Panc1 (cell line): ENCODE measurements at regions of chr1 and their contacts with region 1.

Region 1: DNA sequence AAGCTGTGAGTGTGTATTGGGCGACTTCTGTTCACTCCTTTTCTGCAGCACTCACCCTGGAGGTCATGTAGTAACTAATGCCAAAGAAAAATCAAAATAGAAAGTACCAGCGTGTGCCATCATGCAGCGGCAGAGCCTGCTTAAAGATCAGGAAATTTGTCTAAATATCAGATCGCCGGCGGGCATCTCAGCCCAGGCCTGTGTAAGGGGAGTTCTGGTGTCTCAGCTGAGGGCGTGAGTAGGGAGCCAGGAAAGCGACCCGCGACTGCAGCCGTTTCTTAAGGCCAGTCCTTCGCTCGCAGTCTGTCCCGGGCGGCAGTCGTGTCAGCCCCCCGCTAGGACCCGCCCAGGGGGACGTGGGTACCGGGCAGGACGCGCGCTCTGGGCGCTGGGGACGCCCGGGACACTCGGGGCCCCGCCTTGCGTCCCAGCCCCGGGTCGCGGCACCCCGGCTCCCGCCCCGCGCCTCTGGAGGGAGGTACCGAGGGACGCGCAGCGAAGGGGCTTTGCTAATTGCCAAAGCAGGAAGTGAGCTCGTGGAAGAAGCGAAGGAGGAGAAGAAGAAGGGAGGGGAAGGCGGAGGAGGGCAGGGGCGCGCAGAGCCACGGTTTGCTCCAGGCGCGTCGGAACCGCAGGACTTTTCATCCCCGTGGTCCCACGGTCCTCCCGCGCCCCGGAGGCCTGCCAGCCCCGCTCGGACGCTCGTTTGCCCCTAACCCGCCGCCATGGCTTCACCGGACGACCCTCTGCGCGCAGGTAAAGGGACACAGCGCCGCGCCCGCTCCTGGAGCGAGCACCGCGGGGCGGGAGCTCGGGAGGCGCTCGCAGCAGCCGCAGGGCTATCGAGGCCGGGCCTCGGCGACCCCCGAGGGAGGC is 1.1 kb downstream of the EDARADD start:
- DNase-seq: no peak
- ATAC-seq: peak; percentile 86
- H3K4me3 ChIP-seq: peak overlapping the region; percentile 72 to 95
- H3K27ac ChIP-seq: peak overlapping the region; percentile 98
- H3K4me1 ChIP-seq: peaks cover 58% of the 10 kb centered on the region
- H3K27me3 ChIP-seq: no peaks in the 10 kb centered on the region
- CTCF ChIP-seq: no peak

Region 2: DNA sequence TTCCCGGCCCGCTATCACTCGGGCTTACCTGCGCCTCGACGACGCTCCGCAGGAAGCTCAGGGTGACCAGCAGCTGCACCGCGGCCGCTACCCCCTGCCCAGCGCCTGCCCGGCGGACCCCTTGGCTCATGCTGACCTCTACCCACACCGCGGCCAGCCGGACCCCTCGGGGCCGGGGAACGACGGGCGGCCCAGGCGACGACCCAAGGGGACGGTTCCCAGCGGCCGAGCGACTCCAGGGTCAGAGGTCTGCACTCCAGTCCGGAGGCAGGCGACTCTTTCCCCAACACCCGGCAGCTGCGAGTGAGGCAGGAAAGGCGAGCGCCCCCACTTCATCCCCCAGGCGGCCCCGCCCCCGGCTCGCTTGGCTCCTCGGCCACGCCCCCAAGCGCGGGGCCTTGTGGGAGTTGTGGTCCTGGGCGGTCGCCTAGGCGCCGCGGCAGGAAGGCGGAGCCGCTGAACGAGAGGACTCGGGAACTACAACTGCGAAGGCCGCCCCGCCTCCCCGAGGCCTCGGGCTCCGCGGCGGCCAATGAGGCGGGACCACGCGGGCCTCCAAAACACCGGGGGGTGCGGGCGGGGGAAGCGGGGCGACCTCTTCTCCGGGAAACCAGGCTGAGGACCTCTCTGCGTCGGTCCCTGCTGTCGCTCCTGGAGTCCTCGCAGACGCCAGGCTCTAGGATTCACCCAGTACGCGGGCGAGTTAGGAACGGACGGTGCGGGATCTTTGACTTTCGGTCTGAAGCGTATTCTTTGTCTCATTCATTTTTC is 113.3 kb before region 1 on chr1 and contains the start of gene ERO1B:
- CTCF ChIA-PET with region 1: no interaction called
- POLR2A ChIA-PET with region 1: no interaction called
- in situ Hi-C with region 1: no loop called
- intact Hi-C with region 1: loop called (anchors 10 kb)
- DNase-seq: peak; percentile 59
- ATAC-seq: peak; percentile 98
- H3K4me3 ChIP-seq: peak within 1 kb of the TSS; percentile 80 to 93
- H3K27ac ChIP-seq: peak within 1 kb of the TSS; percentile 81
- H3K4me1 ChIP-seq: peaks cover 28% of the 10 kb centered on the region
- H3K27me3 ChIP-seq: peaks cover 2% of the 10 kb centered on the region; the same call in 1 of the 2 replicates
- CTCF ChIP-seq: no peak
- total RNA-seq, gene ERO1B: 19.9 TPM

Region 3: GRCh38 chr1:236523701-236524141 is 128.6 kb after region 1 on chr1 and contains the start of gene LGALS8:
- CTCF ChIA-PET with region 1: no interaction called
- POLR2A ChIA-PET with region 1: no interaction called
- in situ Hi-C with region 1: no loop called
- intact Hi-C with region 1: loop called (anchors 5 kb)
- DNase-seq: no peak
- ATAC-seq: peak; percentile 89
- H3K4me3 ChIP-seq: peak within 1 kb of the TSS; percentile 80 to 96
- H3K27ac ChIP-seq: peak within 1 kb of the TSS; percentile 100
- H3K4me1 ChIP-seq: peaks cover 41% of the 10 kb centered on the region
- H3K27me3 ChIP-seq: no peaks in the 10 kb centered on the region
- CTCF ChIP-seq: no peak
- total RNA-seq, gene LGALS8: 221 TPM